PC-3 (cell line): ENCODE measurements at regions of chr16 and their contacts with region 1.

Region 1: GRCh38 chr16:53743149-53743566 is 39.2 kb downstream of the FTO start:
- DNase-seq: peak; percentile 43
- ATAC-seq: 0 out of 2 replicates have a peak, but pooled peaks have one; percentile 42
- H3K4me3 ChIP-seq: no peak overlapping the region
- H3K27ac ChIP-seq: no peak overlapping the region
- H3K4me1 ChIP-seq: peaks cover 26% of the 10 kb centered on the region
- H3K27me3 ChIP-seq: no peaks in the 10 kb centered on the region
- CTCF ChIP-seq: peak; percentile 79

Region 2: GRCh38 chr16:53549970-53550690 is 193.0 kb before region 1 on chr16:
- CTCF ChIA-PET with region 1: no interaction called
- POLR2A ChIA-PET with region 1: no interaction called
- intact Hi-C with region 1: loop called (anchors 10 kb)
- DNase-seq: peak; percentile 59
- ATAC-seq: peak; percentile 79
- H3K4me3 ChIP-seq: no peak overlapping the region
- H3K27ac ChIP-seq: no peak overlapping the region
- H3K4me1 ChIP-seq: no peaks in the 10 kb centered on the region
- H3K27me3 ChIP-seq: peaks cover 28% of the 10 kb centered on the region
- CTCF ChIP-seq: peak; percentile 68

Region 3: GRCh38 chr16:53695070-53695469 is 48.1 kb before region 1 on chr16:
- CTCF ChIA-PET with region 1: no interaction called
- POLR2A ChIA-PET with region 1: no interaction called
- intact Hi-C with region 1: no loop called
- DNase-seq: peak; percentile 7
- ATAC-seq: no peak
- H3K4me3 ChIP-seq: no peak overlapping the region
- H3K27ac ChIP-seq: no peak overlapping the region
- H3K4me1 ChIP-seq: no peaks in the 10 kb centered on the region
- H3K27me3 ChIP-seq: no peaks in the 10 kb centered on the region
- CTCF ChIP-seq: no peak

Region 4: DNA sequence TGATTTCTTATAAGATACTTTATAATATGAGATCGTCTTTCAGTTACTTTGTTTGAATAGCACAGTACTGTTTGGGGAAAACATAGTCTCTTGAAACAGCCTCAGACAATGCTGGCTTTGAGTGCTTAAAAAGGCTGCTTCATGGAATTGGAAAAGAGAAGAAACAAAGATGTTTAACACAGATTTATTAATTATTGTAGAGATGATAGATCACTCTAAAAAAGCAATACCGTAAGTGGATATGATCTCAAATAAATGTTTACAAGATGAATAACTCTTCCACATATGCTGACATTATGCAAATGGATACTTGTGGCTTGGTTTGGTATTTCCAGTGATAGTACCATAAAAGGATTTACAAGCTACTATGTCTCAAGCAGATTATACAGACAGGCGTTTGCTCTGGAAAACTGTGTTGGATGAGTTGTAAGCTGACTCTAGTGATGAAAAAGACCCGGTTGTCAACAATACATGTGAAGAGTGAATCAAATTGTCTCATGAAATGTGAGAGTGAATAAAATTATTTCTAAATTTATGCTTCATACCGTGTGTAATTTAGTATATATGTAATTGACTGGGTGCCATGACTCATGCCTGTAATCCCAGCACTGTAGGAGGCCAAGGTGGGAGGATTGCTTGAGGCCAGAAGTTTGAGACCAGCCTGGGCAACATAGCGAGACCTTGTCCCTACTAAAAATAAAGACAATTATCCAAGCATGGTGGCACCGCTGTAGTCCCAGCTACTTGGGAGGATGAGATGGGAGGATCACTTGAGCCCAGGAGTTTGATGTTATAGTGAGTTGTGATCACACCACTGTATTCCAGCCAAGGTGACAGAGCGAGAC is 66.2 kb after region 1 on chr16:
- CTCF ChIA-PET with region 1: no interaction called
- POLR2A ChIA-PET with region 1: no interaction called
- intact Hi-C with region 1: no loop called
- DNase-seq: peak; percentile 75
- ATAC-seq: peak; percentile 93
- H3K4me3 ChIP-seq: 0 out of 2 replicates have a peak overlapping the region, but pooled peaks have one; percentile 6
- H3K27ac ChIP-seq: peak overlapping the region; percentile 21; the same call in 1 of the 2 replicates
- H3K4me1 ChIP-seq: peaks cover 12% of the 10 kb centered on the region
- H3K27me3 ChIP-seq: no peaks in the 10 kb centered on the region
- CTCF ChIP-seq: no peak

Region 5: DNA sequence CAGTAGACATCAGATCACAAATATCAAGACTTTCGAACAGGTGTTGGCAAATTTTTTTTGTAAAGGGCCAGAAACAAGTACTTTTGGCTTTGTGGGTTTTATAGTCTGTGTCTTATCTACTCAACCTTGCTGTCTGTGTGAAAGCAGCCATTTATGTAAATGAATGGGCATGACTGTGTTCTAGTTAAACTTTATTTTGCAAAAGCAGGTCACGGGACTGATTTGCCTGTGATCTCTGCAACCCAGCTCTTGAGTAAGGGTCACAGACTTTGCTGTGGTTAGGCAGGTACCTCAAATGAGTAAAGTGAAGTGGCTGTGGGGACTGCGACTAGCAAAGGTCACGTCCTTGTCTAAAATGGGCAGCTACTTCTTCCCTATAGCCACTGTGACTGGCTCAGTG is 97.3 kb after region 1 on chr16:
- CTCF ChIA-PET with region 1: no interaction called
- POLR2A ChIA-PET with region 1: no interaction called
- intact Hi-C with region 1: no loop called
- DNase-seq: no peak
- ATAC-seq: no peak
- H3K4me3 ChIP-seq: no peak overlapping the region
- H3K27ac ChIP-seq: no peak overlapping the region
- H3K4me1 ChIP-seq: no peaks in the 10 kb centered on the region
- H3K27me3 ChIP-seq: no peaks in the 10 kb centered on the region
- CTCF ChIP-seq: no peak

Region 6: DNA sequence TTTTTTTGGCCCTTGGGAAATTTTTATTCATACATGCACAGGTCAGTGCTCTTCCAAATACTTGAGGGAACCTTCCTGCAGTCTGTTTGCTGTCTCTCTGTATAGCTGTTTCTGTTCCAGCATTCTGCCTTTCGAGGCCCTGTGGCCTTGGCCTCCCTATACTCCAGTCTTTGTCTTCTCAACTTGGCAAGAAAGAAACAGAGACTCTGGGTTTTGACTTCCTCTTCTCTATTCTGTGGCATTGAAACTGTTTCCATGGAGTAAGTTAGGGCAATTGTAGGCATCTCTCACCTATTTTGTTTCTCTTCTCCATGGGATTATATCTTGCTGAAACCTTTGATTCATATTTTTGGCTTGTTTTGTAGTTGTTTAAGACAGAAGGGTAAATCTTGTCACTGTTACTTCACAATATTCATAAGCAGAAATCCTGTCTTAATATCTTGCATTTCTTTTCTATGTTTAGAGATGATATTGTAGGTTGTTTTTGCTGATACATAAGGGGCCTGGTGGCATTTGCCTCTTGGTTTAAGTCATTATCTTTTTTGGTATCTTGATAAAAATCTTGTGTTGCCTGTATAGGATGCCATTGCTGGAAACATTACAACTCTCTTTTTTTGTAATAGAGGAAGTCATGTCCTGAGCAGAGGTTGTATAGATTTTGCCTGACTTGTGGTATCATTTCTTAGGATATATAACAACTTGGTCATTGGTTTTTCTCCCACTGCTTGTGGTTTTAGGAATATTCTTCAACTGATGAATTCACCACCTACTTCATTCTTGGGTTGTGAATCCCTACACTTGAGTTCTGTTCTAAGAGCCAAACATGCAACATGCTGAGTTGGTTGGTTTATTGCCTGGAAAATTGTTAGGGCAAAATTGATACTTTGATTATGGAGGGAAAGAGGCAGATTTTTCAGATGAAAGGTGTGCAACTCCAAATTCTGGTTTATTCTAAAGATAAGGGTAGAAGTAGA is 129.4 kb after region 1 on chr16:
- CTCF ChIA-PET with region 1: no interaction called
- POLR2A ChIA-PET with region 1: no interaction called
- intact Hi-C with region 1: no loop called
- DNase-seq: no peak
- ATAC-seq: no peak
- H3K4me3 ChIP-seq: no peak overlapping the region
- H3K27ac ChIP-seq: no peak overlapping the region
- H3K4me1 ChIP-seq: no peaks in the 10 kb centered on the region
- H3K27me3 ChIP-seq: no peaks in the 10 kb centered on the region
- CTCF ChIP-seq: no peak